HepG2 (cell line): ENCODE measurements at regions of chr20 and their contacts with region 1.

Region 1: GRCh38 chr20:10476319-10476724 is 41.2 kb downstream of the SLX4IP start:
- DNase-seq: no peak
- ATAC-seq: no peak
- H3K4me3 ChIP-seq: no peak overlapping the region
- H3K27ac ChIP-seq: no peak overlapping the region
- H3K4me1 ChIP-seq: peaks cover 14% of the 10 kb centered on the region
- H3K27me3 ChIP-seq: no peaks in the 10 kb centered on the region
- CTCF ChIP-seq: no peak
- EP300 ChIP-seq: no peak
- POLR2A ChIP-seq: no peak
- RAD21 ChIP-seq: no peak

Region 2: DNA sequence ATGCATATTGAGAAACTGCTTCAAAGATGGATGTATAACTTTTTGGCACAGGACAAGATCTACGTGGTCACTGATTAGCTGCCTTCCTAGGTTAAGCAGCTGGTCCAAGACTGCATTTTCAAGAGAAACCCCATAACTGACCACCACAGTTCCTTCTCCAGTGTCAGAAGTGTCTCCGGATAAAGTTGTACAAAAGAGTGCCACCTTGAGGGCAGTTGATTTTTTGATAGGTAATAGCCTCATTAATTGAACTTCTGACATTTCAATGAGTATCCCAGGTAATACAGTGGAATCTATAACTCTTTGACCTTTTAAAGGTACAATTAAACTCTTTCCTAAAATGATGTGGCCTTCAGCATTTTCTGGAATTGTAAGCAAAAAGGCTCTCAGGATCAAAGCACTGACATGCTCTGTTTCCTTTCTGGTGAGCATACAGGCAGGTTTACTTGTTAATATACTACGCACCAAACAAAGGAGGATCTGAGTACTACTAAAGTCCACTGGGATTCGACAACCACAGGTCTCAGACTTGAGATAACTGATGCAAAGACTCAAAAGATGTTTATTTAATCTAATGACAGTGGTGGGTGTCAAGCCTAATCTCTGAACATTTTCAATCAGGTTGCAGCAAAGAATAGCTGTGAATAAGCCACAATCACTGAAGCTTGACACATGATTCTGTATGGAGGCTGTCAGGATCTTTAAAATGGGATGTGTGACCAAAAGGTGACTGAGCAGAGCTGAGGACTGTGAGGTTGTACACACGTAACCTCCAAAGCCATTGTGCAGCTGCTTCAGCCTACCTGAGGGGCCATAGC is 63.5 kb before region 1 on chr20:
- CTCF ChIA-PET with region 1: no interaction called
- POLR2A ChIA-PET with region 1: no interaction called
- in situ Hi-C with region 1: loop called (anchors 10 kb)
- intact Hi-C with region 1: no loop called
- DNase-seq: no peak
- ATAC-seq: peak; percentile 55; the same call in 2 of the 3 replicates
- H3K4me3 ChIP-seq: no peak overlapping the region
- H3K27ac ChIP-seq: no peak overlapping the region
- H3K4me1 ChIP-seq: 0 out of 2 replicates have a peak, but pooled peaks cover 7% of the 10 kb centered on the region
- H3K27me3 ChIP-seq: no peaks in the 10 kb centered on the region
- CTCF ChIP-seq: peak; percentile 60
- EP300 ChIP-seq: no peak
- POLR2A ChIP-seq: 0 out of 4 replicates have a peak, but pooled peaks of 1 of the 2 experiments have one; percentile 23
- RAD21 ChIP-seq: no peak

Region 3: GRCh38 chr20:10501402-10501801 is 25.1 kb after region 1 on chr20:
- CTCF ChIA-PET with region 1: no interaction called
- POLR2A ChIA-PET with region 1: no interaction called
- in situ Hi-C with region 1: no loop called
- intact Hi-C with region 1: no loop called
- DNase-seq: no peak
- ATAC-seq: no peak
- H3K4me3 ChIP-seq: no peak overlapping the region
- H3K27ac ChIP-seq: no peak overlapping the region
- H3K4me1 ChIP-seq: peaks cover 15% of the 10 kb centered on the region
- H3K27me3 ChIP-seq: no peaks in the 10 kb centered on the region
- CTCF ChIP-seq: no peak
- EP300 ChIP-seq: no peak
- POLR2A ChIP-seq: no peak
- RAD21 ChIP-seq: no peak